Heart right ventricle (tissue), 16 donors: ENCODE measurements at regions of chr18 and their contacts with region 1.

Region 1: DNA sequence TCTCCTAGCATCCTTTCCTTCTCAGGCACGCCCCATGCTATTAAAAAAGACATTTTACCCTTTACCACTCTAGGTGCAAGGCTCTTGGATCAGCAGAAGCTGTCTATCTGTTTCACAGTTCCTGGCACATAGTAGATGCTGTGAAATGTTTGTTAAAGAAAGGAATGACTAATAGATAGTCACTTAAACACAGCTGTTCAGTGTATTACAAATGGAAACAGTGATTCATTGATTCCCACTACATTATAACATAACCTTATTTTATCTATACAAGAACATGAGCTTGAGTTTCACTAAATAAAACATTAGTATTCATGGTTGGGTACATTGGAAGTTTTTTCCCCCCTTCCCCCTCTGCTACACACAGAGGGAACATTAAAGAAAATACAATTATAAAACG is 142.1 kb downstream of the ASXL3 start:
- DNase-seq: no peak
- ATAC-seq: peak in 1 of 8 donors; percentile 22
- H3K4me3 ChIP-seq: no peak overlapping the region
- H3K27ac ChIP-seq: no peak overlapping the region
- H3K4me1 ChIP-seq: peaks cover 0 to 3% (median 0%) of the 10 kb centered on the region in 9 donors
- H3K27me3 ChIP-seq: no peaks in the 10 kb centered on the region
- CTCF ChIP-seq: no peak

Region 2: GRCh38 chr18:33579349-33580215 is 140.6 kb before region 1 on chr18:
- intact Hi-C with region 1: loop called in 2 of 10 experiments (anchors 5 to 10 kb)
- DNase-seq: no peak
- ATAC-seq: peak in 6 of 8 donors; percentile 6 to 34 (median 25)
- H3K4me3 ChIP-seq: peak overlapping the region; percentile 34 to 78 (median 60)
- H3K27ac ChIP-seq: peak overlapping the region in 9 of 10 donors; percentile 41 to 95 (median 82)
- H3K4me1 ChIP-seq: peaks cover 0 to 23% (median 8%) of the 10 kb centered on the region in 9 donors
- H3K27me3 ChIP-seq: peaks cover 0 to 36% (median 0%) of the 10 kb centered on the region in 7 donors
- CTCF ChIP-seq: no peak

Region 3: GRCh38 chr18:33666915-33667314 is 53.2 kb before region 1 on chr18:
- intact Hi-C with region 1: loop called in 1 of 10 experiments (anchors 10 kb)
- DNase-seq: no peak
- ATAC-seq: no peak
- H3K4me3 ChIP-seq: no peak overlapping the region
- H3K27ac ChIP-seq: no peak overlapping the region
- H3K4me1 ChIP-seq: no peaks in the 10 kb centered on the region
- H3K27me3 ChIP-seq: no peaks in the 10 kb centered on the region
- CTCF ChIP-seq: no peak